ENCODE measurements at regions of chr11 and their contacts with region 1.

Region 1: GRCh38 chr11:406978-407739 is 7.6 kb downstream of the SIGIRR start:
- DNase-seq: peak; percentile 84
- H3K4me3 Mint-ChIP-seq: no peak overlapping the region
- H3K27ac Mint-ChIP-seq: peak overlapping the region; percentile 23
- H3K4me1 Mint-ChIP-seq: no peaks in the 10 kb centered on the region
- H3K27me3 Mint-ChIP-seq: peaks cover 2% of the 10 kb centered on the region

Region 2: GRCh38 chr11:207208-207862 is 199.8 kb before region 1 on chr11 and contains the starts of genes BET1L and RIC8A:
- intact Hi-C with region 1: loop called (anchors 2 kb)
- DNase-seq: peak; percentile 97
- H3K4me3 Mint-ChIP-seq: peak within 1 kb of the TSS; percentile 89
- H3K27ac Mint-ChIP-seq: peak within 1 kb of the TSS; percentile 98
- H3K4me1 Mint-ChIP-seq: peaks cover 55% of the 10 kb centered on the region
- H3K27me3 Mint-ChIP-seq: no peaks in the 10 kb centered on the region
- total RNA-seq, gene BET1L: 42.0 and 48.7 TPM in 2 replicates
- total RNA-seq, gene RIC8A: 132 and 149 TPM in 2 replicates

Region 3: DNA sequence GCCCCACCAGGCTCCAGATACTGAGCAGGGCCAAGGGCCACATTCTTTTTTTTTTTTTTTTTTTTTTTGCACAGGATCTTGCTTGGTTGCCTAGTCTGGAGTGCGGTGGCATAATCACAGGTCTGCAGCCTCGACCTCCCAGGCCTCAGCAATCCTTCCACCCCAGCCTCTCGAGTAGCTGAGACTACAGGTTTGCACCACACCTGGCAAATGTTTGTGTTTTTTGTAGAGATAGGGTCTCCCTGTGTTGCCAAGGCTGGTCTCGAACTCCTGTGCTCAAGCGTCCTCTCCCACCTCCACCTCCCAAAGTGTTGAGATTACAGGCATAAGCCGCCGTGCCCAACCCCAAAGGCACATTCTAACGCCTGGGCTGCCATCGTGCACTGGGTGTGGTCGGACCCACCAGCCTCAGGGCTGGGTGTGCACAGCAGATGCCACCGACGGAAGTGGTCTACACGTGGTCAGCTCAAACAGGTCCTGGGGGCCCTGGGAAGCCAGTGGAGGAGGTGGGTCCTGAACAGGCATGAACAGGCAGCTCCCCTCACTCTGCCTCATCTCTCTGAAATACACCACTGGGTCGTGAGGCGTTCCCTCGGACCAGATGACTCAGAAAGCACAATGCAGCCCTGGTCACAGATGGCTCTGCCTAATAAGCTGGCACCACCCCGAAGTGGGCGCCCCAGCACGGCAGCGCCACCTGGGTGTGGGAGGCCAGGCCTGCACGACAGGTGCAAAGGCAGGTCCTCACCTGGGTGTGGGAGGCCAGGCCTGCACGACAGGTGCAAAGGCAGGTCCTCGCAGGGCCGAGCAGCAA is 43.0 kb before region 1 on chr11:
- intact Hi-C with region 1: no loop called
- DNase-seq: no peak
- H3K4me3 Mint-ChIP-seq: no peak overlapping the region
- H3K27ac Mint-ChIP-seq: no peak overlapping the region
- H3K4me1 Mint-ChIP-seq: no peaks in the 10 kb centered on the region
- H3K27me3 Mint-ChIP-seq: peaks cover 34% of the 10 kb centered on the region

Region 4: DNA sequence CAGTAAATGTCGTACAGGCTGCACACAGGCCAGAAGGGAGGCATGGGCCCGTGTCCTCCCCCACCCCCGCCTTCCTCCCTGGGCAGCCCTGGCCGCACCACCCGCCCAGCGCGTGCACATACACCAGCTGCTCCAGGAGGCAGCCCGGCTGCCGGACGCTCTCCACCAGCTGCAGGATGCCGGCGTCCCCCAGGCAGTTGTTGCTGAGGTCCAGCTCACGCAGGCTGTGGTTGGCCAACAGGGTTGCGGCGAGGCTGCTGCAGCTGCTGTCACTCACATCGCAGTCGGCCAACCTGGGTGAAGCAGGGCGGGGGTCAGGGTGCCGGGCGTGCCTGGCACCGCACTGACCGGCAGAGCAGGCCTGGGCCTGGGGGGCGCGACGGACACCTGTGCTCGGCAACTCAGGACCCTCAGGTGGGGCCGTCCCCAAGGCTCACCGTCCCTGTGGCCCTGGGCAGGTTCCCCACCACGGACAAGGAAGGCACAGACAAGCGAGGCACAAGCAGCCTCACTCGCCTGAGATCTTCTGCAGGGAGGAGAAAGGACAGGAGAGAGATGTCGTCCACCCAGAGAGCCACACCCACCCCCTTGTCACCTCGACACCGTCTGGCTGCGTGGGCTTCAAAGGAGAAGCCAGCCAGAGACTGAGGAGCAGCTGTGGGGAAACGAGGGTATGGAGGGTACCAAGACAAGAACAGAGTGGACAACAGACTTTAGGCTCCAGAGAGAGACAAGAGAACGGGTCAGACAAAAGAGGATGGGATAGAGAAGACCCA is 87.8 kb after region 1 on chr11:
- intact Hi-C with region 1: no loop called
- DNase-seq: no peak
- H3K4me3 Mint-ChIP-seq: no peak overlapping the region
- H3K27ac Mint-ChIP-seq: no peak overlapping the region
- H3K4me1 Mint-ChIP-seq: peaks cover 8% of the 10 kb centered on the region
- H3K27me3 Mint-ChIP-seq: no peaks in the 10 kb centered on the region

Region 5: DNA sequence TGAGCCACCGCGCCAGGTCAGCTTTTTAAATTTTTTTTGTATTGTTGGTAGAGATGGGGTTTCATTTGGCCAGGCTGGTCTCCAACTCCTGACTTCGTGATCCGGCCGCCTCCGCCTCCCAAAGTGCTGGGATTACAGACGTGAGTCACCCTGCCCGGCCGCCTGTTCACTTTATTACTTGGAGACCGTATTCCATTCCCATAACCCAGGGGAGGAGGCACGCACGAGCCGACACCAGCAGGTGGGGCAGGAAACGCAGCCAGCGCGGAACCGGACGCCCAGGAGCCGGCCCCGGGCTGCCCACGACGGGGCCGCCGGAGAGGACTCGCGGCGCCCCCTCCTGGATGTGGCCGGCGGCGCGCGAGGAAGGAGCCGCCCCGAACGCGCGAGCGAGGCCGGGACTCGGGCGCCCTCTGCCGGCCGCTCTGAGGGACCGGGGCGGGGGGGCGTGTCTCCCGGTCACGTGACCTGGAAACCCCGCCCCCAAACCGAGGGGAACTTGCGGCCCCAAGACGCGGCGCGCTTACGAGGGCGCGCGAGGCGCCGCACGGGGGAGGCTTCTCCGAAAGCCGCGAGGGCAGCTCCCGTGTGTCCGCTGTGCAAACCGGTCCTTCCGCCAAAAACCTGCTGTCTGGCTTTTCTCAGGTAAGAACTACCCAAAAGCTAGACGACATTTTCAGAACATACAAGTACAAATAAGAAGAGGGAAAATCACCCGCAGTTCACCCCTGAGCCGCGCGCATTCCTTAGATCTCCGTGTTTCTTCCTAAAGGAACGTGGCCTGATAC is 111.5 kb after region 1 on chr11:
- intact Hi-C with region 1: loop called (anchors 1 kb)
- DNase-seq: peak; percentile 81
- H3K4me3 Mint-ChIP-seq: peak overlapping the region; percentile 75
- H3K27ac Mint-ChIP-seq: peak overlapping the region; percentile 47
- H3K4me1 Mint-ChIP-seq: peaks cover 5% of the 10 kb centered on the region
- H3K27me3 Mint-ChIP-seq: no peaks in the 10 kb centered on the region